ENCODE measurements at regions of chr1 and their contacts with region 1.

Region 1: GRCh38 chr1:152878042-152878441 is at the start of gene SMCP:
- DNase-seq: peak; percentile 14 to 56 (median 26)
- ATAC-seq: no peak
- H3K4me3 ChIP-seq: no peak within 1 kb of the TSS
- H3K27ac ChIP-seq: no peak within 1 kb of the TSS
- H3K4me1 ChIP-seq: no peaks in the 10 kb centered on the region
- H3K27me3 ChIP-seq: peaks cover 0 to 3% of the 10 kb centered on the region in 2 experiments; a peak in 1 of 5 replicates
- CTCF ChIP-seq: peak; percentile 40 to 56 (median 49); a peak in 5 of 6 replicates
- EP300 ChIP-seq: no peak
- POLR2A ChIP-seq: no peak
- RAD21 ChIP-seq: peak in 1 of 2 experiments; percentile 33; a peak in 2 of 4 replicates
- polyA plus RNA-seq, gene SMCP: not detected

Region 2: DNA sequence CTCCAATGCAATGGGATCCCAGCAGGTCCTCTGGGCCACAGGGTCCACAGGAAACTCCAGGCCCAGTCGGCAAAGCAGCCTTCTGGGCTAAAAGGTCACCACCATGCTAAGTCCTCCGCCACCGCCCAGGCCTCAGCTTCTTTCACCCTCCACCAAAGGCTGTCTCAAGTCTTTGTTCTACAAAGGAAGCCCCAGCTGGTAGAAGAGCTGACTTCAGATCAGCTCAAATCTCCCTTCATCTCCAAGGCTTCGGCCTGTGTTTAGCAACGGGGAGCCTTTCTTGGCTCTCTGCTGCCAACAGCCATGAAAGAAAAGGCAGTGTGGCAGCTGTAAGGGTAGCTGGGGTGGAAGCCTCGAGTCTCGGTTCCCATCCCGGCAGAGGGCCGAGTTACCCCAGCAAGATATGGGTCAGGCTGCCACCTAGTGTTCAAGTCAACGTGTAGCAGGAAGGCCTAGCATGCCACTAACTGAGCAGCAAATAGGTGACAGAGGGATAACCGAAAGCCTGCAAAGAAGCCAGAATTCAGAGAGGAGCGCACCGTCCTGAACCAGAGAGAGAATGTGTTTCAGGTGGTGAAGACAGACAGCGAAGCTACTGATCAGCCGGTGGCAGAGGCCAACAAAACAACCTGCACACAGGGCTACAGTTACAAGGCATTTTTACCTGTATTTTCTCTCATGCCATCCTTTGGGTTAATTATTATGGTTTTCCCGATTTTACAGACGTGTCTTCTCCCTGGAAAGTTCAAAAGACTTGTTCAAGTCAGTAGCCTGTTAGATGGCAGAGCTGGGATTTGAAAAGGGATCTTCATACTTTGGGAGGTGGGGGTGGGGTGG is 437.2 kb before region 1 on chr1:
- CTCF ChIA-PET with region 1: no interaction called
- POLR2A ChIA-PET with region 1: no interaction called
- in situ Hi-C with region 1: no loop called
- intact Hi-C with region 1: no loop called
- DNase-seq: peak; percentile 68 to 83 (median 78)
- ATAC-seq: peak; percentile 99
- H3K4me3 ChIP-seq: no peak overlapping the region
- H3K27ac ChIP-seq: no peak overlapping the region
- H3K4me1 ChIP-seq: no peaks in the 10 kb centered on the region
- H3K27me3 ChIP-seq: peaks cover 0 to 7% of the 10 kb centered on the region in 2 experiments; a peak in 1 of 5 replicates
- CTCF ChIP-seq: peak; percentile 86 to 90 (median 88)
- EP300 ChIP-seq: no peak
- POLR2A ChIP-seq: no peak
- RAD21 ChIP-seq: peak; percentile 40 to 70; a peak in 3 of 4 replicates

Region 3: GRCh38 chr1:152917794-152918193 is 39.8 kb after region 1 on chr1:
- CTCF ChIA-PET with region 1: no interaction called
- POLR2A ChIA-PET with region 1: no interaction called
- in situ Hi-C with region 1: no loop called
- intact Hi-C with region 1: loop called (anchors 5 kb)
- DNase-seq: peak in 2 of 4 experiments; percentile 17 to 33
- ATAC-seq: 0 out of 3 replicates have a peak, but pooled peaks have one; percentile 45
- H3K4me3 ChIP-seq: no peak overlapping the region
- H3K27ac ChIP-seq: no peak overlapping the region
- H3K4me1 ChIP-seq: no peaks in the 10 kb centered on the region
- H3K27me3 ChIP-seq: no peaks in the 10 kb centered on the region
- CTCF ChIP-seq: peak; percentile 44 to 64 (median 62)
- EP300 ChIP-seq: no peak
- POLR2A ChIP-seq: no peak
- RAD21 ChIP-seq: peak; percentile 63 to 73